GM12878 (cell line): ENCODE measurements at regions of chr2 and their contacts with region 1.

Region 1: GRCh38 chr2:201231781-201232466 is 28.4 kb upstream of the CASP8 start:
- DNase-seq: peak; percentile 80
- ATAC-seq: peak; percentile 72
- H3K4me3 ChIP-seq: no peak overlapping the region
- H3K27ac ChIP-seq: peak overlapping the region; percentile 55
- H3K4me1 ChIP-seq: peaks cover 20% of the 10 kb centered on the region
- H3K27me3 ChIP-seq: no peaks in the 10 kb centered on the region
- CTCF ChIP-seq: peak; percentile 92 to 98 (median 95); a peak in 5 of 6 replicates
- EP300 ChIP-seq: no peak
- POLR2A ChIP-seq: peak; percentile 76
- RAD21 ChIP-seq: peak; percentile 98

Region 2: GRCh38 chr2:200963124-200963917 is 268.6 kb before region 1 on chr2 and contains the start of gene ORC2:
- CTCF ChIA-PET with region 1: interaction called, 33 read pairs
- POLR2A ChIA-PET with region 1: interaction called, 3 read pairs
- RAD21 ChIA-PET with region 1: interaction called, 7 read pairs
- SMC1A ChIA-PET with region 1: interaction called, 8 read pairs
- in situ Hi-C with region 1: no loop called
- intact Hi-C with region 1: loop called (anchors 5 kb)
- DNase-seq: peak; percentile 78
- ATAC-seq: peak; percentile 93
- H3K4me3 ChIP-seq: peak within 1 kb of the TSS; percentile 99
- H3K27ac ChIP-seq: peak within 1 kb of the TSS; percentile 67
- H3K4me1 ChIP-seq: peaks cover 7% of the 10 kb centered on the region; the same call in 1 of the 2 replicates
- H3K27me3 ChIP-seq: no peaks in the 10 kb centered on the region
- CTCF ChIP-seq: peak; percentile 58 to 73 (median 64)
- EP300 ChIP-seq: no peak
- POLR2A ChIP-seq: peak; percentile 94
- RAD21 ChIP-seq: peak; percentile 52
- polyA plus RNA-seq, gene ORC2: 6.1 to 6.7 TPM

Region 3: GRCh38 chr2:201158111-201158929 is 73.6 kb before region 1 on chr2:
- CTCF ChIA-PET with region 1: interaction called, 35 read pairs
- POLR2A ChIA-PET with region 1: interaction called, 6 read pairs
- RAD21 ChIA-PET with region 1: interaction called, 31 read pairs
- SMC1A ChIA-PET with region 1: interaction called, 28 read pairs
- in situ Hi-C with region 1: no loop called
- intact Hi-C with region 1: no loop called
- DNase-seq: peak; percentile 77
- ATAC-seq: peak; percentile 98
- H3K4me3 ChIP-seq: no peak overlapping the region
- H3K27ac ChIP-seq: peak overlapping the region; percentile 35
- H3K4me1 ChIP-seq: peaks cover 14% of the 10 kb centered on the region
- H3K27me3 ChIP-seq: no peaks in the 10 kb centered on the region
- CTCF ChIP-seq: peak; percentile 62 to 76 (median 66)
- EP300 ChIP-seq: peak; percentile 59 to 70; a peak in 2 of 4 replicates
- POLR2A ChIP-seq: no peak
- RAD21 ChIP-seq: peak; percentile 77

Region 4: GRCh38 chr2:201220102-201220570 is 11.8 kb before region 1 on chr2:
- CTCF ChIA-PET with region 1: interaction called, 45 read pairs
- POLR2A ChIA-PET with region 1: interaction called, 5 read pairs
- RAD21 ChIA-PET with region 1: interaction called, 17 read pairs
- SMC1A ChIA-PET with region 1: interaction called, 17 read pairs
- in situ Hi-C with region 1: no loop called
- intact Hi-C with region 1: no loop called
- DNase-seq: no peak
- ATAC-seq: no peak
- H3K4me3 ChIP-seq: no peak overlapping the region
- H3K27ac ChIP-seq: no peak overlapping the region
- H3K4me1 ChIP-seq: peaks cover 6% of the 10 kb centered on the region
- H3K27me3 ChIP-seq: no peaks in the 10 kb centered on the region; a peak in 1 of 4 replicates
- CTCF ChIP-seq: no peak
- EP300 ChIP-seq: no peak
- POLR2A ChIP-seq: no peak
- RAD21 ChIP-seq: no peak

Region 5: DNA sequence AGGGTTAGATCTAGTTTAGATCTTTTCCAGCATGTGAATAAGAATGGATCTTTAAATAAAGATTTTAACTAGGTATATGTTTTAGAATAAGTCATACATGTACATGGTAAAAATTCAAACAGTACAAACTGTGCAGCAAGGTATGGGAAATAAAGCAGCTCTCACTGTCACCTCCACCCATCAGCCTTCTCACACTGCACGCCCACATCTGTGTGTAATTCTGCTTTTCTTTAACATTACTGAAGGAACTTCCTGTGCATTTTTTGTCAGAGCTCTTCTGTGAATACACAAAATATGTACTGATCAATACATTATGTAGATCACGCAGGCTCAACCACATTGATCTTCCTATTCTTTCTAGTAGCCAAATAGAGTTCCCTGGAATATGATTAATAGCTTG is 31.9 kb after region 1 on chr2:
- CTCF ChIA-PET with region 1: interaction called, 85 read pairs
- POLR2A ChIA-PET with region 1: interaction called, 33 read pairs
- RAD21 ChIA-PET with region 1: interaction called, 79 read pairs
- SMC1A ChIA-PET with region 1: interaction called, 87 read pairs
- in situ Hi-C with region 1: no loop called
- intact Hi-C with region 1: loop called (anchors 1 kb)
- DNase-seq: no peak
- ATAC-seq: peak; percentile 37
- H3K4me3 ChIP-seq: no peak overlapping the region
- H3K27ac ChIP-seq: no peak overlapping the region
- H3K4me1 ChIP-seq: peaks cover 20% of the 10 kb centered on the region
- H3K27me3 ChIP-seq: no peaks in the 10 kb centered on the region
- CTCF ChIP-seq: no peak
- EP300 ChIP-seq: no peak
- POLR2A ChIP-seq: no peak
- RAD21 ChIP-seq: no peak

Region 6: DNA sequence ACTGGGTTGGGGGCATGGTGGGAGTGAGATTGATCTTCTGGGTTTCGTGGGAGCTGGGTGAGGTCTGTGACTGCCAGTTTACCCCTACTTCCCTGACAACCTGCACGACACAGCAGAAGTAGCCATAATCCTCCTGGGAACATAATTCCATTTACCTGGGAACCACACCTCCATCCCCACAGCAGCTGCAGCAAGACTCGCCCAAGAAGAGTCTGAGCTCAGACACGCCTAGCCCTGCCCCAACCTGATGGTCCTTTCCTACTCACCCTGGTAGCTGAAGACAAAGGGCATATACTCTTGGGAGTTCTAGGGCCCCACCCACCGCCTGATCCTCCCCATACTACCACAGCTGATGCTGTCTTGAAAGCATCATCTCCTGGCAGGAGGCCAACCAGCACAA is 81.4 kb after region 1 on chr2:
- CTCF ChIA-PET with region 1: no interaction called
- POLR2A ChIA-PET with region 1: no interaction called
- RAD21 ChIA-PET with region 1: no interaction called
- SMC1A ChIA-PET with region 1: no interaction called
- in situ Hi-C with region 1: no loop called
- intact Hi-C with region 1: no loop called
- DNase-seq: no peak
- ATAC-seq: no peak
- H3K4me3 ChIP-seq: no peak overlapping the region
- H3K27ac ChIP-seq: no peak overlapping the region
- H3K4me1 ChIP-seq: no peaks in the 10 kb centered on the region
- H3K27me3 ChIP-seq: no peaks in the 10 kb centered on the region
- CTCF ChIP-seq: no peak
- EP300 ChIP-seq: no peak
- POLR2A ChIP-seq: no peak
- RAD21 ChIP-seq: no peak

Region 7: DNA sequence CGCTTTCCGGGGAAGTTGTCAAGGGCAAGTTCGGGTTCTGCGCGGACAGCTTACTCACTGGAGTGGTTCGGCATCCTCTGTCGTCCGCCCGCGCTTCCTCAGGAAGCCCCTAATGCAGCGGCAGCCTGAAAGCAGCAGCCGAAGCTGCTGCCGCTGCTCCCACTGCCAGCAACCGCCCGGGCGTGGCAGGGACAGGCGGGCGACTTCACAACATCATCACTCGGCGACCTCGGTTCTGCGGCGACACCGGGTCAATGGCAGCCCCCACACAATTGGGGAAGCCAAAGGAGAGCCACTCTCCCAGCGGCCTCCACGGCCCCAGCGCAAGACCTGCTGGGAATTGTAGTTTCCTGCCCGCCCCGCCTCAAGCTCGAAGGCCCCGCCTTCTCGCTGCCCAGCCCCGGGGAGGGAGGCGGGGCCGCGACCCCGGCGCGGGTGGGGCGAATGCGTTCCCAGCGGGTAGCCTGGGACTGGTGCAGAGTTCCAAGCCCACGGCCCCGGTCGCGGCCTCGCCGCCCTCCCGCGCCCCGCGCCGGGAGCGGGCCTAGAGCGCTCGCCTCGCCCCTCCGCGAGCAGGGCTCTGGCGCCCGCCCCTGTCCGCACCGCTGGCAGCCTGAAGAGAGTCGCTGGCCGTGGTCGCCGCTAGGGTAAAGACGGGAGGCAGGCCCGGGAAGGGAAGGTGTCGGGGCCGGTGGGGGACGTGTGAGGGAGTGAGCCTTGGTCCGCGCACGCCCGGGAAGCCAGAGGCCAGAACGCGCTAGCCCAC is 219.6 kb after region 1 on chr2 and contains the starts of genes STRADB and TRAK2:
- CTCF ChIA-PET with region 1: interaction called, 6 read pairs
- POLR2A ChIA-PET with region 1: interaction called, 6 read pairs
- RAD21 ChIA-PET with region 1: interaction called, 16 read pairs
- SMC1A ChIA-PET with region 1: interaction called, 3 read pairs
- in situ Hi-C with region 1: no loop called
- intact Hi-C with region 1: loop called (anchors 2 kb)
- DNase-seq: peak; percentile 80
- ATAC-seq: peak; percentile 97
- H3K4me3 ChIP-seq: peak within 1 kb of the TSS; percentile 96
- H3K27ac ChIP-seq: peak within 1 kb of the TSS; percentile 85
- H3K4me1 ChIP-seq: peaks cover 22% of the 10 kb centered on the region
- H3K27me3 ChIP-seq: no peaks in the 10 kb centered on the region
- CTCF ChIP-seq: peak in 1 of 3 experiments; percentile 31; a peak in 2 of 6 replicates
- EP300 ChIP-seq: 0 out of 4 replicates have a peak, but pooled peaks of 1 of the 2 experiments have one; percentile 40
- POLR2A ChIP-seq: peak; percentile 95
- RAD21 ChIP-seq: 0 out of 2 replicates have a peak, but pooled peaks have one; percentile 3
- polyA plus RNA-seq, gene STRADB: 12.1 to 15.4 TPM
- polyA plus RNA-seq, gene TRAK2: 5.2 to 5.5 TPM